AG04450 (cell line): ENCODE measurements at regions of chrX and their contacts with region 1.

Region 1: DNA sequence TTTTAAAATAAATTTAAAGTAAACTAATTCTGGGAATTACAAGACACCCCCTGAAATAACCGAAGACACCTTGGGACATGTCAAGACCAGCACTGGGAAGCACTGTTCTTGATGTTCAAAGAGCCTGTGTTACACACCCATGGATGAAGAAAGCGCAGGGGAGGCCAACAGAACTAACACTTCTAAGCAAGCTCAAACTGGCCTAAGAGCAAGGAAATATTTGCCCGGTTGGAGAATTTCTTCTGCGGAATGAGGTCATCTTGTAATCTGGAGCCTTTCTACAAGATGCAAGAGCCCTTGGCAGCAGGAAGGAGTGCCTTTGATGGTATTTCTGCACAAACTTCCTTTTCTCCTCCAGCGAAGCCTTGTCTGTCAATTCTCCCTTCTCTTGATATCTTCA is 9.3 kb upstream of the EFHC2 start:
- DNase-seq: no peak
- H3K4me3 ChIP-seq: no peak overlapping the region
- H3K27ac ChIP-seq: no peak overlapping the region
- H3K27me3 ChIP-seq: no peaks in the 10 kb centered on the region
- CTCF ChIP-seq: no peak

Region 2: GRCh38 chrX:44253575-44253942 is 99.2 kb before region 1 on chrX:
- CTCF ChIA-PET with region 1: no interaction called
- POLR2A ChIA-PET with region 1: no interaction called
- DNase-seq: no peak
- H3K4me3 ChIP-seq: no peak overlapping the region
- H3K27ac ChIP-seq: no peak overlapping the region
- H3K27me3 ChIP-seq: no peaks in the 10 kb centered on the region
- CTCF ChIP-seq: no peak

Region 3: DNA sequence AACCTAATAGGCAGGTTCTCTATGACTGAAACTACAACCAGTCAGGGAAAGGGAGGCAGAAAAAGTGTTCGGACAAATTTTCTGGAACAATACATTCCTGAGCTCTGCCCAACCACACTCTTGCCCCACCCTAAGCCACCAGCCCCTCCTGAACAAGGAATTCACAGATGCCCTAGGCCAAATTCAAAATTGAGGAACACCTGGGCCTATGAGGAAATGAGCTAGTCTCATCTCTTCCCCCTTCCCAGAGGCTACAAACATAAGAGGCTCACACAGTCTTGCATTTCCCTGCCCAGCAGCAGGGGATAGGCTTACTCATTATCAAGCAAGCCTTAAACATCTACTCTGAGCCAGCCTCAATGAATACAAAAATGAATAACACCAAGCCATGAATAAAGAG is 1907.8 kb after region 1 on chrX:
- CTCF ChIA-PET with region 1: interaction called, 10 read pairs
- POLR2A ChIA-PET with region 1: no interaction called
- DNase-seq: no peak
- H3K4me3 ChIP-seq: no peak overlapping the region
- H3K27ac ChIP-seq: no peak overlapping the region
- H3K27me3 ChIP-seq: no peaks in the 10 kb centered on the region
- CTCF ChIP-seq: no peak